Transverse colon (tissue), 4 donors: ENCODE measurements at regions of chr11 and their contacts with region 1.

Region 1: GRCh38 chr11:56577621-56578020 is at the start of gene OR5M10:
- DNase-seq: no peak
- H3K4me3 ChIP-seq: no peak within 1 kb of the TSS
- H3K27ac ChIP-seq: no peak within 1 kb of the TSS
- H3K4me1 ChIP-seq: no peaks in the 10 kb centered on the region
- H3K27me3 ChIP-seq: no peaks in the 10 kb centered on the region
- CTCF ChIP-seq: no peak
- EP300 ChIP-seq: no peak
- POLR2A ChIP-seq: no peak
- total RNA-seq, gene OR5M10: not detected

Region 2: DNA sequence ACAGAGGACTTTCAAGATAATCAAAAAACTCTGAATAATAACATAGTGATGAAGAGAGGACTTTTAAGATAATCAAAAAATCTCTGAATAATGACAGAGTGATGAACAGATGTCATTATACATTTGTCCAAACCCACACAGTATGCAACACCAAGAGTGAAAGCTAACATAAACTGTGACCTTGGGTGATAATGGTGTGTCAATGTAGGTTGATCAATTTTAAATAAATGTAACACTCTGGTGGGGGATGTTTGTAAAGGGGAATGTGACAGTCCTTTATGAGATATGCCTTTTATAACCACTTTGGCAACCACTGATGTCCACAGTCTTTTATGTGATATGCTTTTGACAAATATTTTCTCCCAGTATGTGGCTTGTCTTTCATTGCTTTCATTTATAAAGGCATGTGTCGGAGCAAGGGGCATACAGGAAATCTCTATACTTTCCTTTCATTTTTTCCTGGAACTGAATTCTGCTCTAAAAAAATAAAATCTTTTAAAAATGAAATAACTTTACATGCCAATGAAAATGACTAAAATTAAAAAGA is 111.0 kb after region 1 on chr11:
- in situ Hi-C with region 1: loop called in 1 of 4 experiments (anchors 25 kb)
- intact Hi-C with region 1: no loop called
- DNase-seq: no peak
- H3K4me3 ChIP-seq: no peak overlapping the region
- H3K27ac ChIP-seq: no peak overlapping the region
- H3K4me1 ChIP-seq: peaks cover 0 to 10% (median 4%) of the 10 kb centered on the region in 4 donors
- H3K27me3 ChIP-seq: no peaks in the 10 kb centered on the region
- CTCF ChIP-seq: no peak
- EP300 ChIP-seq: no peak
- POLR2A ChIP-seq: no peak

Region 3: DNA sequence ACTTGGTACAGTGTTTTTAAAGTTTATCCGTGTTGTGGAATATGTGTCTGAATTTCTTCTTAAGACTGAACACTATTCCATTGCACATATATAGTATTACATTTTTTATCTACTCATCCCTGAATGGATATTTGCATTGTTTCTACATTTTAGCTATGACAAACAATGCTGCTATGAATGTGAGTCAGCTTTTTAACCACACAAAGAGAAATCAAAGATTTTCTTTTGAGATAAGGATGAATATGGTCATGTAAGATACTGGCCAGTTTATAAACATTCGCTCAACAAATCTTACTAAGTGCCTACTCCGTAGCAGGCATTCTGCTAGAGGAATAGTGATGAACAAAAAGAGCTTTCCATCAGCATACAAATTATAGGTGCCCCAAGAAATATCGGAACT is 187.4 kb after region 1 on chr11:
- in situ Hi-C with region 1: no loop called
- intact Hi-C with region 1: no loop called
- DNase-seq: no peak
- H3K4me3 ChIP-seq: no peak overlapping the region
- H3K27ac ChIP-seq: no peak overlapping the region
- H3K4me1 ChIP-seq: no peaks in the 10 kb centered on the region
- H3K27me3 ChIP-seq: no peaks in the 10 kb centered on the region
- CTCF ChIP-seq: no peak
- EP300 ChIP-seq: no peak
- POLR2A ChIP-seq: no peak